Activated B cell treated with CpG ODN at 0.5 μM for 24 hours (primary cell): ENCODE measurements at regions of chr9 and their contacts with region 1.

Region 1: GRCh38 chr9:89549031-89549644 is 51.2 kb upstream of the SEMA4D start:
- DNase-seq: peak; percentile 74
- ATAC-seq: peak; percentile 100
- H3K4me3 Mint-ChIP-seq: no peak overlapping the region
- H3K27ac Mint-ChIP-seq: peak overlapping the region; percentile 41
- H3K4me1 Mint-ChIP-seq: peaks cover 6% of the 10 kb centered on the region
- H3K27me3 Mint-ChIP-seq: no peaks in the 10 kb centered on the region
- CTCF ChIP-seq: peak; percentile 94

Region 2: GRCh38 chr9:88173378-88173999 is 1375.6 kb before region 1 on chr9:
- CTCF ChIA-PET with region 1: no interaction called
- POLR2A ChIA-PET with region 1: no interaction called
- intact Hi-C with region 1: no loop called
- DNase-seq: no peak
- ATAC-seq: no peak
- H3K4me3 Mint-ChIP-seq: no peak overlapping the region
- H3K27ac Mint-ChIP-seq: no peak overlapping the region
- H3K4me1 Mint-ChIP-seq: no peaks in the 10 kb centered on the region
- H3K27me3 Mint-ChIP-seq: no peaks in the 10 kb centered on the region
- CTCF ChIP-seq: no peak

Region 3: DNA sequence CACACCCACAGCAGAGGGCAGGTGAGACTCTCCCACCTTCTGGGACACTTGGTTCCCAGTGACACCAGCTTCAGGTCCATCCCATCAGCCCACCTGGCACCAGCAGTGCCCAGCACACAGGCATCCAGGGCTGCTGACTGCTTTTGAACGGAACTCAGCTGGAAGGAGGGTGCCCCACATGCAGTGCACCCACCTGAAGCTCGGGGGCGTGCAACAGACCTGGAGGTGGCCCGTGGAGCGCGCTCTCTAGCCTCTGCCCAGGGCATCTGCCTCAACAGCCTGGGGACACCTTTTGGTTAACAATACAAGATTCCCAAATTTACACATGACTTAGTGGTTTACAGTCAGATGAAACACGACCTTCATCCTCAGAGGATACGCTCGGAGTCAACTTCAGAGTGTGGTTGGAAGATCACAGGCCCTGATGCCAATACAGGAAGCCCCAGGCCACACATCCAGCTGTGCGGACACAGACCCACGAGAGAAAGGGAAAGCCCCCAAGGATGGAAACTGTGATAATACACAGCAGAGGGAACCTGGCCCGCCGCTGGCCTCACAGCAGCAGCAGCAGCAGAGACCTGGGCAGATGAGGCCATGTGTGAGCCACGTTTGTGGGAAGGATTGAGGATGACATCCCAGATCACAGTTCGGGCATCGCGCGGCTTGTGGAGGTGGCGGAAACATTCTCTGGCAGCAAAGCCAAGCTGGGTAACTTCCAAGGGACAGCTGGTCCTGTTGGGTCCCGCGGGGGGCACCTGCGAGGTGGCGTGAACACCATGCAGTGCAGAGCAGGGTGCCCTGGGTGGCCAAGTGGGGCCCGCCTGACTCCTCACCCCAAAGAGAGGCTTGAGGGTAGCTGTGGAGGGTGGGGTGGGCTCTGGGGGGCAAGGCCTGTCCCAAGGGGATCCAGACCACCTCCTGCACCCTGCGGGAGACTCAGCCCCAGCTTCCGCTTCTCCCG is 166.8 kb before region 1 on chr9:
- CTCF ChIA-PET with region 1: interaction called, 19 read pairs
- POLR2A ChIA-PET with region 1: no interaction called
- intact Hi-C with region 1: loop called (anchors 2 kb)
- DNase-seq: no peak
- ATAC-seq: peak; percentile 58
- H3K4me3 Mint-ChIP-seq: no peak overlapping the region
- H3K27ac Mint-ChIP-seq: peak overlapping the region; percentile 70
- H3K4me1 Mint-ChIP-seq: peaks cover 22% of the 10 kb centered on the region
- H3K27me3 Mint-ChIP-seq: no peaks in the 10 kb centered on the region
- CTCF ChIP-seq: no peak

Region 4: GRCh38 chr9:89428901-89429890 is 119.9 kb before region 1 on chr9:
- CTCF ChIA-PET with region 1: interaction called, 120 read pairs
- POLR2A ChIA-PET with region 1: interaction called, 13 read pairs
- intact Hi-C with region 1: loop called (anchors 1 kb)
- DNase-seq: no peak
- ATAC-seq: peak; percentile 48
- H3K4me3 Mint-ChIP-seq: no peak overlapping the region
- H3K27ac Mint-ChIP-seq: peak overlapping the region; percentile 63
- H3K4me1 Mint-ChIP-seq: peaks cover 93% of the 10 kb centered on the region
- H3K27me3 Mint-ChIP-seq: no peaks in the 10 kb centered on the region
- CTCF ChIP-seq: no peak

Region 5: DNA sequence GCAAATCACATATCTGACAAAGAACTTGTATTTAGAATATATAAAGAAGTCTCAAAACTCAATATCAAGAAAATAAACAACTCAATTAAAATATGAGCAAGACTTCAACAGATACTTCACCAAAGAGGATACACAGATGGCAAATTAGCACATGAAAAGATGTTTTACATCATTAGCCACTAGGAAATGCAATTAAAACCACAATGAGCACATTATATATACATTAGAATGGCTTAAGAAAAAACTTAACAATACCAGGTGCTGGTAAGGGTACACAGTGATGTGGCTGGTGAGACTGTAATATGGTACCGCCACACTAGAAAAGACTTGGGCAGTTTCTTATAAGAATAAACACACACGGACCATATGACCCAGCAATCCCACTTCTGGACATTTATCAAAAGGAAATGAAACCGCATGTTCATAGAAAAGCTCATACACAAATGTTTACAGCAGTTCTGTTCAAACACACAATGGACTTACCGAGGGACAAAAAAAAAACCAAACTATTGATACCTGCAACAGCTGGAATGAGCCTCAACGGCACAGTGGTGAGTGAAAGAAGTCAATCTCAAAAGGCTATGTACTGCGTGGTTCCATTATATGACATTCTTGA is 78.8 kb before region 1 on chr9:
- CTCF ChIA-PET with region 1: interaction called, 10 read pairs
- POLR2A ChIA-PET with region 1: interaction called, 3 read pairs
- intact Hi-C with region 1: no loop called
- DNase-seq: no peak
- ATAC-seq: no peak
- H3K4me3 Mint-ChIP-seq: no peak overlapping the region
- H3K27ac Mint-ChIP-seq: no peak overlapping the region
- H3K4me1 Mint-ChIP-seq: peaks cover 71% of the 10 kb centered on the region
- H3K27me3 Mint-ChIP-seq: no peaks in the 10 kb centered on the region
- CTCF ChIP-seq: no peak

Region 6: GRCh38 chr9:89522261-89522958 is 26.7 kb before region 1 on chr9:
- CTCF ChIA-PET with region 1: interaction called, 21 read pairs
- POLR2A ChIA-PET with region 1: interaction called, 3 read pairs
- intact Hi-C with region 1: loop called (anchors 2 kb)
- DNase-seq: peak; percentile 49
- ATAC-seq: peak; percentile 93
- H3K4me3 Mint-ChIP-seq: peak overlapping the region; percentile 78
- H3K27ac Mint-ChIP-seq: peak overlapping the region; percentile 96
- H3K4me1 Mint-ChIP-seq: peaks cover 85% of the 10 kb centered on the region
- H3K27me3 Mint-ChIP-seq: no peaks in the 10 kb centered on the region
- CTCF ChIP-seq: no peak

Region 7: GRCh38 chr9:89631384-89631783 is 82.2 kb after region 1 on chr9:
- CTCF ChIA-PET with region 1: no interaction called
- POLR2A ChIA-PET with region 1: no interaction called
- intact Hi-C with region 1: no loop called
- DNase-seq: no peak
- ATAC-seq: no peak
- H3K4me3 Mint-ChIP-seq: no peak overlapping the region
- H3K27ac Mint-ChIP-seq: no peak overlapping the region
- H3K4me1 Mint-ChIP-seq: no peaks in the 10 kb centered on the region
- H3K27me3 Mint-ChIP-seq: no peaks in the 10 kb centered on the region
- CTCF ChIP-seq: no peak